B cell (primary cell): ENCODE measurements at regions of chr15 and their contacts with region 1.

Region 1: DNA sequence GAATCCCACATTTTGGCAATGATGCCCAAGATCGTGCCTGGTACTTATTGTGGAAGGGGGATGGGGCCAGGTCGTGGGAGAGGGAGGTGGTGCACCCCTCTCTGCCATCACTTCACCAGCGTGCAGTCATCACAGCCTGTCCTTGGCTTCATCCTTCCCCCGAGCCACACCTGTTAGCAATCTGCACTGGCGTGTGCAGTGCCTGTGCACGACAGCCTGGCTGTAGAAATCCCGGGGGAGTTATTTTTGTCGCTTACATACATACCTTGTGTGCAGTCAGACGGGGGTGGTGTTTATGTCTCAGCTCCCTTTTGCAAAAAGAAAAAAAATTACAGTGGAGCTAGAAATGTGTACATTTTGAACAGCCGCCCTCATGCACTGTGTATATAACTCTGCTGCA is 216.0 kb downstream of the TLE3 start:
- DNase-seq: peak; percentile 88
- ATAC-seq: peak; percentile 91
- H3K4me3 ChIP-seq: no peak overlapping the region
- H3K4me3 Mint-ChIP-seq: peak overlapping the region; percentile 82
- H3K27ac ChIP-seq: no peak overlapping the region
- H3K27ac Mint-ChIP-seq: peak overlapping the region; percentile 92
- H3K4me1 ChIP-seq: peaks cover 22 to 35% of the 10 kb centered on the region in 2 donors
- H3K4me1 Mint-ChIP-seq: peaks cover 42% of the 10 kb centered on the region
- H3K27me3 ChIP-seq: peaks cover 0 to 18% (median 0%) of the 10 kb centered on the region in 4 experiments
- H3K27me3 Mint-ChIP-seq: no peaks in the 10 kb centered on the region
- CTCF ChIP-seq: no peak

Region 2: GRCh38 chr15:69666411-69666882 is 215.3 kb before region 1 on chr15:
- CTCF ChIA-PET with region 1: no interaction called
- POLR2A ChIA-PET with region 1: no interaction called
- intact Hi-C with region 1: loop called (anchors 5 kb)
- DNase-seq: peak; percentile 67
- ATAC-seq: peak; percentile 37
- H3K4me3 ChIP-seq: peak overlapping the region in 3 of 5 experiments; percentile 22 to 48 (median 30)
- H3K4me3 Mint-ChIP-seq: peak overlapping the region; percentile 79
- H3K27ac ChIP-seq: peak overlapping the region in 1 of 2 donors; percentile 54
- H3K27ac Mint-ChIP-seq: peak overlapping the region; percentile 80
- H3K4me1 ChIP-seq: peaks cover 44 to 55% of the 10 kb centered on the region in 2 donors
- H3K4me1 Mint-ChIP-seq: peaks cover 49% of the 10 kb centered on the region
- H3K27me3 ChIP-seq: peaks cover 0 to 7% (median 2%) of the 10 kb centered on the region in 4 experiments
- H3K27me3 Mint-ChIP-seq: peaks cover 8% of the 10 kb centered on the region
- CTCF ChIP-seq: no peak

Region 3: GRCh38 chr15:69760890-69761568 is 120.7 kb before region 1 on chr15:
- CTCF ChIA-PET with region 1: interaction called, 4 read pairs
- POLR2A ChIA-PET with region 1: interaction called, 16 read pairs
- intact Hi-C with region 1: no loop called
- DNase-seq: peak; percentile 63
- ATAC-seq: peak; percentile 80
- H3K4me3 ChIP-seq: no peak overlapping the region
- H3K4me3 Mint-ChIP-seq: peak overlapping the region; percentile 76
- H3K27ac ChIP-seq: no peak overlapping the region
- H3K27ac Mint-ChIP-seq: peak overlapping the region; percentile 81
- H3K4me1 ChIP-seq: peaks cover 65 to 68% of the 10 kb centered on the region in 2 donors
- H3K4me1 Mint-ChIP-seq: peaks cover 69% of the 10 kb centered on the region
- H3K27me3 ChIP-seq: no peaks in the 10 kb centered on the region
- H3K27me3 Mint-ChIP-seq: peaks cover 3% of the 10 kb centered on the region
- CTCF ChIP-seq: no peak

Region 4: DNA sequence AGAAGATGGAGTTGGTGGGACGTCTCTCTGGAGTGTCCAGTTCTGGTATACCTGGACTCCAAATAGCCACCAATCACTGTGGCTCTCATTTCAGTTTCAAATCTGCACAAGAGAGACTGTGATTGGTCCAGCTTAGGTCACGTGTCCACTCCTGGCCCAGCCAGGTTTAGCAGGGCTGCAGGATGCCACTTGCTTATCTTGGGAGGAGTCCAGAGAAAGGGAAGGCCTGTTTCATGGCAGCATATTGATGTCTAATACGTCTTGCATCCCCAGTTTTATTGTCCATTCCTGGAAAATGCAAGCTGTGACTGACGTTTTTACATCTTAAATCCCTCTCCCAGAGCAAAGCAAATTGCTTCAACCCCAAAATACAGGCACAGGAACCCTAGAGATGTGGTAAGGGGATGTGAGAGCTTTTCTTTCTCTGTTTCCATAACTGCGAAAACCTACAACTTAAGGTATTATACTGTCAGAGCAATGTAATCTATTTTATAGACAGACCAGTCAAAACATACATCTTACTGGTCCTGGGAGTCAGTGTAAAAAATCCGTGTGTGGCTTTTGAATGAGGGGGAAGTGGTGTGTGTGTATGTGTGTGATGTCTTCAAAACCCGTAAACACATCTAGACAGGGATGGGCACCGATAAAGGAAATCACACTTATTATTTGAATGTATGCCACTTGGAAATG is 58.4 kb before region 1 on chr15:
- CTCF ChIA-PET with region 1: no interaction called
- POLR2A ChIA-PET with region 1: no interaction called
- intact Hi-C with region 1: no loop called
- DNase-seq: no peak
- ATAC-seq: no peak
- H3K4me3 ChIP-seq: no peak overlapping the region
- H3K4me3 Mint-ChIP-seq: no peak overlapping the region
- H3K27ac ChIP-seq: no peak overlapping the region
- H3K27ac Mint-ChIP-seq: no peak overlapping the region
- H3K4me1 ChIP-seq: no peaks in the 10 kb centered on the region
- H3K4me1 Mint-ChIP-seq: no peaks in the 10 kb centered on the region
- H3K27me3 ChIP-seq: peaks cover 0 to 16% (median 0%) of the 10 kb centered on the region in 4 experiments
- H3K27me3 Mint-ChIP-seq: peaks cover 21% of the 10 kb centered on the region
- CTCF ChIP-seq: no peak

Region 5: GRCh38 chr15:69976366-69976994 is 94.7 kb after region 1 on chr15:
- CTCF ChIA-PET with region 1: interaction called, 12 read pairs
- POLR2A ChIA-PET with region 1: interaction called, 11 read pairs
- intact Hi-C with region 1: loop called (anchors 1 kb)
- DNase-seq: peak; percentile 75
- ATAC-seq: no peak
- H3K4me3 ChIP-seq: no peak overlapping the region
- H3K4me3 Mint-ChIP-seq: no peak overlapping the region
- H3K27ac ChIP-seq: no peak overlapping the region
- H3K27ac Mint-ChIP-seq: no peak overlapping the region
- H3K4me1 ChIP-seq: peaks cover 24 to 29% of the 10 kb centered on the region in 2 donors
- H3K4me1 Mint-ChIP-seq: peaks cover 30% of the 10 kb centered on the region
- H3K27me3 ChIP-seq: peaks cover 0 to 18% (median 3%) of the 10 kb centered on the region in 4 experiments
- H3K27me3 Mint-ChIP-seq: peaks cover 24% of the 10 kb centered on the region
- CTCF ChIP-seq: no peak

Region 6: DNA sequence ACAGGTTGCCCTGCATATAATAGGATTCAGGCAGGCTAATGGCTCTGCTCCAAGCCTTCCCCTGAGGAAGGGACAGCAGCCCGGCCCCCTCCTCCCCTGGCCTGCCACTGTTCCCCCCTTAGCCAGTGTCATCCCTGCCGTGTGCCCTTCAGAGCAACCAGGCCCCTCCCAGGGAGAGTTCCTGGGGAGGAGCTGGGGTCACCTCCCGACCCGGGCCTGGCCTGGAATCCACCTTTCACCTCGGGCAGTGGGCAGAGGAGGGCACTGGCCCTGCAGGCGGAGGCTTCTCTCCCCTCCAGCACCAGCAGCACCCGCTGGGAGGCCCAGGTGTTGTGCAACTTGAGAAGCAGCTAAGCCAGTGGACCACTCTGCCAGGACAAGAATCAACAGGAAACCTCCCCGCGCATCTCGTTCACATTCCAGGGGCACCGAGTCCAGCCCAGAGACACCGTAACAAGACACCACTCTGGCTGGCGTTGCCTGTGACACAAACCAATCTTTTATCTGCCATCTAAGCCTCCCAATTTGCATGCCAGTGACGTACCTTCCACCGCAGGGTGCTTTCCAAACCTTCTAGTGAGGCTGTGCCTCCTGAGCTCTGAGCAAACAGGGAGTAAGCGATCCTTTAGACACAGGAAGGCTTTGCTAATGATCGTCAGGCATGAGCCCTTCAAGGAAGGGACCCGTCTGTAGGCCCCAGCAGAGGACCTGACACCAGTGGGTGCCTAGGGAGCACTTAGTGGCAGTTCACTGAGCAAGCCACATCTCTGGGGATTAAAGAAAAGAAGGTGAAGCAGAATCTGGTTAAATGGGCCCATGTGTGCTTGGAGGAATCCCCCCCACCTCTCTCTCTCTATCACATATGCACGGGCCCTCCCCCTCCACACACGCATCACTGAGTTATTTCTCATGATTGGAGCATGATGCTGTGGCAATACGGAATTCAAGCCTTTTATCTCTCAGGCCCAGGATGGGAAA is 314.8 kb after region 1 on chr15:
- CTCF ChIA-PET with region 1: no interaction called
- POLR2A ChIA-PET with region 1: no interaction called
- intact Hi-C with region 1: loop called (anchors 2 kb)
- DNase-seq: peak; percentile 86
- ATAC-seq: peak; percentile 85
- H3K4me3 ChIP-seq: no peak overlapping the region
- H3K4me3 Mint-ChIP-seq: peak overlapping the region; percentile 72
- H3K27ac ChIP-seq: no peak overlapping the region
- H3K27ac Mint-ChIP-seq: peak overlapping the region; percentile 89
- H3K4me1 ChIP-seq: peaks cover 33 to 57% of the 10 kb centered on the region in 2 donors
- H3K4me1 Mint-ChIP-seq: peaks cover 51% of the 10 kb centered on the region
- H3K27me3 ChIP-seq: peaks cover 0 to 16% (median 6%) of the 10 kb centered on the region in 4 experiments
- H3K27me3 Mint-ChIP-seq: peaks cover 26% of the 10 kb centered on the region
- CTCF ChIP-seq: no peak

Region 7: DNA sequence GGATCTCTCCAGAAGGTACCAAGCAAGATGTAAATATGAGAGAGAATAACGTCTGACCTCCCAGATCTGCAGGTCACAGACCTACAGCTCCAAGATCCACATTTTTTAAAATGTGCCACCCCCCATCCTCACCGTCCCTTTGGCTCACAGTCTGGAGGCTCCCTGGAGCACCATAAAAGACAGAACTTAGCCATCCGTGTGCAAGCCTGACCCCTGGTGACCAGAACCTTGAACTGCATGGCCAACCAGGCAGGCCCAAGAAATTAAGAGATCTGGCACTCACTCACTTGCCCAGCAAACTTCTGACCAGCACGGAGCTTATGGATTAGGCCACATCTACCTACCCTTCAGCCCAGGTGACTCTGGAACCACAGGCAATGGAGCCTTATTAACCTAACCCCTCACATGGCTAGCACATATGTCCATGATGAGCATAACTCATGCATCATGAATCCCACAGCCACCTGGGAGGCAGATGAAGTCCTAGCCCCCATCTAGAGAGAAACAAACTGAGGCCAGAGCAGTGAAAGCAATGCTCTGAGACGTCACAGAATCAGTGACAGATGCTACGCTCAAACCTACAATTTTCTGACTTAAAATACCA is 606.3 kb after region 1 on chr15:
- CTCF ChIA-PET with region 1: no interaction called
- POLR2A ChIA-PET with region 1: no interaction called
- intact Hi-C with region 1: loop called (anchors 5 kb)
- DNase-seq: peak; percentile 81
- ATAC-seq: no peak
- H3K4me3 ChIP-seq: no peak overlapping the region
- H3K4me3 Mint-ChIP-seq: no peak overlapping the region
- H3K27ac ChIP-seq: no peak overlapping the region
- H3K27ac Mint-ChIP-seq: peak overlapping the region; percentile 52
- H3K4me1 ChIP-seq: peaks cover 44 to 55% of the 10 kb centered on the region in 2 donors
- H3K4me1 Mint-ChIP-seq: peaks cover 53% of the 10 kb centered on the region
- H3K27me3 ChIP-seq: no peaks in the 10 kb centered on the region
- H3K27me3 Mint-ChIP-seq: no peaks in the 10 kb centered on the region
- CTCF ChIP-seq: peak; percentile 92